ENCODE measurements at regions of chr3 and their contacts with region 1.

Region 1: DNA sequence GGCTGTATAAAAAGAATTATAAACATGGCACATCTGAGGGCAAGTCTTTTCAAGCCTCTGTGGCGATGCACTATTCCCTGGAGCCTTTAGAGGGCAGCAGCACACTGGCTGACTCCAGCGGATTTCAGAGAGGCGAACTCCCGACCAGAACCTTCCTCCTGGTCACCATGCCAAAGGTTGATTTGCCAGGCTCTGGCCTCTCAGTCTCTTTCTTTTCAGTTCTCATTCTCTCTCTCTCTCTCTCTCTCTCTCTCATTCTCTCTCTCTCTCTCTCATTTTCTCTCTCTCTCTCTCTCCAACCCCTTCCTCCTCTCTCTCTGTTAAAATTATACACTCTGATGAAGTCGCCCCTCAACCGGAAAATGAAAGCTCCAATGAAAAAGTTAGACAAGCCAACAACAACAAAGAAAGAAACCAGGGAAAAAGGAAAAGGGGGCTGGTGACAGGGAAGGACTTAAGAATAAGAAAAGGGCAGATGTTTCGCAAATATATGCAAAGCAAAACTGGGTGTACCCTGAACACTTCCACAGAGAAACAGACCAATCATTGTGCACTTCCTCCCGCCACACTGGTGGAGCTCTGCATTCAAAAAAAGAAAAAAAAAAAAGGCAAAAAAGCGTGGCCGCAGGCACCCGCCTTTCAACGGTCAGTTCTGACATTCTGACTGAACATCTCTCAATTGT is 90.2 kb downstream of the TIGIT start:
- DNase-seq: peak; percentile 82
- H3K4me3 Mint-ChIP-seq: peak overlapping the region; percentile 70
- H3K27ac Mint-ChIP-seq: peak overlapping the region; percentile 67
- H3K4me1 Mint-ChIP-seq: peaks cover 13% of the 10 kb centered on the region
- H3K27me3 Mint-ChIP-seq: no peaks in the 10 kb centered on the region

Region 2: DNA sequence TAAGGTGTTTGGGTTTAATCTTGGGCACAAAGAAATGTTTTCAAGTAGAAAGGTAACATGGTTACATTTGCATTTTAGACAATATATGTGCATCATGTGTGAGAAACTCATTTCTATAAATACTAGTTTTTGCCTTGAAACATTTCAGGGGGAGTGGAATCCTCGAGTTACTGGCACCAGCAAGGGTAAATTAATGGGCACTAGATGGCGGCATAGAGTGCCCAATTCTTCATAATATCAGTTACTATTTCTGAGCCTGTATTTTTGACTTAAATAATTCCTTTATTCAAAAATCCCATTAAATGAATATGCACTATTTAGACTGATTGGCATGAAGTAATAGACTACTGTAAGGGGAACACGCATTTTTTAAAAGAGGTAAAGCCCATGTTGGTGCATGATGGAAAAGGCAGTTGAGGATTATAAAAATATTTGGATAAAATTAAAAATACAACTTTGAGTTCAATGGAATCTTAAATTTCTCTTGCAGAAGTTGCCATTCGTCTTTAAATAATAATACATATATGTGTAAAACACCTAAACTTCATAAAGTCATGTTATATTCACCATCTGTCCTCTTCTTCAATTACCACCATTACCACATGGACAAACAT is 656.8 kb after region 1 on chr3:
- CTCF ChIA-PET with region 1: no interaction called
- intact Hi-C with region 1: loop called (anchors 10 kb)
- DNase-seq: peak; percentile 65
- H3K4me3 Mint-ChIP-seq: no peak overlapping the region
- H3K27ac Mint-ChIP-seq: no peak overlapping the region
- H3K4me1 Mint-ChIP-seq: peaks cover 16% of the 10 kb centered on the region
- H3K27me3 Mint-ChIP-seq: no peaks in the 10 kb centered on the region

Measured in activated naive CD4-positive, alpha-beta T cell treated with anti-CD3 and anti-CD28 coated beads for 36 hours (primary cell).